GM10248 (cell line): ENCODE measurements at regions of chr6 and their contacts with region 1.

Region 1: GRCh38 chr6:75296811-75297779 is 12.5 kb upstream of the TMEM30A start:
- DNase-seq: peak; percentile 39
- CTCF ChIP-seq: peak; percentile 62

Region 2: GRCh38 chr6:75317503-75318206 is 20.6 kb after region 1 on chr6:
- CTCF ChIA-PET with region 1: interaction called, 10 read pairs
- POLR2A ChIA-PET with region 1: no interaction called
- DNase-seq: no peak
- CTCF ChIP-seq: no peak